ENCODE measurements at regions of chr16 and their contacts with region 1.

Region 1: DNA sequence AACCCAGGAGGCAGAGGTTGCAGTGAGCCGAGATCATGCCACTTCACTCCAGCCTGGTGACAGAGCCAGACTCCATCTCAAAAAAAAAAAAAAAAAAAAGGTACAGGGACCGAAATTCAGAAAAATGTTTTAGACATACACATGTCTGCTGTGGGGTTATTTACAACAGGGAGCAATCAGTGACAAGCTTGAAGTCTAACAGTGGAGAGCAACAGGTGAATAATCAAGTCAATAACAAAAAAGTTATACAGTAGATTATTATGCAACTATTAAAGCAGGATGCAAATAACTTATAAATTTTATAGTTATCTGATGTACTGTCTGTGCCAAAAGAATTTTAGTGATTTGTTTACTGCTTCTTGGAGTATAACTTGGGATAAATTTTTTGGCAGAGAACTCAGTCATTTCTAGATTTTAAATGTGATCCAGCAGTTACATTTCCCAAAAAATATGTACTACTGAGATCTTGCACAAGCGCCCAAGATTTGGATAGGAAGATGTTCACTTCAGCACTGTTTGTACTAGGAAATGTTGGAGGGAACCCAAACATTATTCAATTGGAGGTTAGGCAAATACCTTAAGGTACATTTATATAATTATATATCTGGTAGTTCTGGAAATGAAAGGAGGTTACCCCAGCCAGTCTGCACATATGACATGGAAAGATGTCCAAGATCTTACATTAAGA is 34.1 kb downstream of the EEF2K start:
- DNase-seq: no peak
- H3K4me3 ChIP-seq: no peak overlapping the region
- H3K27ac ChIP-seq: no peak overlapping the region
- H3K4me1 ChIP-seq: peaks cover 9% of the 10 kb centered on the region; the same call in 1 of the 2 replicates
- H3K27me3 ChIP-seq: no peaks in the 10 kb centered on the region
- CTCF ChIP-seq: no peak

Region 2: GRCh38 chr16:22117609-22118008 is 122.6 kb before region 1 on chr16:
- CTCF ChIA-PET with region 1: no interaction called
- POLR2A ChIA-PET with region 1: no interaction called
- intact Hi-C with region 1: no loop called
- DNase-seq: peak in 1 of 2 experiments; percentile 72
- H3K4me3 ChIP-seq: no peak overlapping the region
- H3K27ac ChIP-seq: no peak overlapping the region
- H3K4me1 ChIP-seq: no peaks in the 10 kb centered on the region
- H3K27me3 ChIP-seq: no peaks in the 10 kb centered on the region
- CTCF ChIP-seq: no peak

Region 3: DNA sequence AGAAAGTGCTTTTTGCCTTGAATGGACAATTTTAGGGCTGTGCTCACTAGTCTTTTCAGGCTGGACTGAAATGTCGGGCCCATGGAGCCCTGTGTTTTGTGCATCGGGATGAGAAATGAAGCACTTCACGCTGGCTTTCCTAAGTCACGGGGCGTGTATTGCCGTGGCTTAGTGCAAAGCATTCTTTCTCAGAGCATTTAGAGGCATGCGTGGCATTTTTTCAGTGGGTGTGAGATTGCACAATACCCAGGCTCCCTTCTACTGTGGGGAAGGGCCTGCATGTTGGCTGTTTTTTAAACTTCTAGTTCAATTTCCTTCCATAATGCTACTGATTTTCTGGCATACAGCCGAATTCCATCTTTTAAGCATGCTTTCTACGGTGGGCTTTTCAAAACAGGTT is 44.5 kb after region 1 on chr16:
- CTCF ChIA-PET with region 1: no interaction called
- POLR2A ChIA-PET with region 1: no interaction called
- intact Hi-C with region 1: loop called (anchors 5 kb)
- DNase-seq: no peak
- H3K4me3 ChIP-seq: no peak overlapping the region
- H3K27ac ChIP-seq: no peak overlapping the region
- H3K4me1 ChIP-seq: no peaks in the 10 kb centered on the region
- H3K27me3 ChIP-seq: no peaks in the 10 kb centered on the region
- CTCF ChIP-seq: no peak

Region 4: DNA sequence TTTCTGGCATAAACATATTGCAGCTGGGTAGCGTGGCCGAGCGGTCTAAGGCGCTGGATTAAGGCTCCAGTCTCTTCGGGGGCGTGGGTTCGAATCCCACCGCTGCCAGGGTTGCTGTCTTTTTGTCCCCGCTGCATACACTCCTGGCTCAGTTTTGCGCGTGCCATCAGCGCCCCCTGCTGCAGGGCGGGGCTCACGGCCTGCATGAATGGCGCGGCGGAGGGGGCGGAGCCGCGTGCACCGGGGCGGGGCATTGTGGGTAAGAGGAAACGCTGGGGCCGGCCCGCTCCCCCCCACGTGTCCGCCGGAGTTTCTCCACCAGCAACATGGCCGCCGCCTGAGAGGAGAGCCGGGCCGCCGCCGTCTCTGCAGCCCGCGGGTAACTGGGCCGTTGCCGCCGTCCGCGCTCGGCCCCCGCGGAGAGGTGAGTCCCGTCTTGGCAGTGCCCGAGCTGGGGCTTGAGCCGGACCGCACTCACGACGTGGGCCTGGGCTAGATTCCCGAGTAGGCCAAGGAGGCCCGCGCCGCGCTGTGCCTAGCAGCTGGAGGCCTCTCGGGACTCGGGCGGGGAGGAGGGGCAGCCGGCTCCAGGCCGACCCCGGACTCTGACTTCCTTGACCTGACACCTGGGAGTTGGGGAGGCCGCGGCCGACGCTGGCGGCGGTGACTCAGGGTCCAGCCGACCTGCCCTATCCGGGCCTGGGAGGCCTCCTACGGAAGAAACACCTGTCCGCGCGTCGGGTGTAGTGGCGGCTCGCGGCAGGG is 57.1 kb after region 1 on chr16 and contains the start of gene POLR3E:
- CTCF ChIA-PET with region 1: no interaction called
- POLR2A ChIA-PET with region 1: no interaction called
- intact Hi-C with region 1: no loop called
- DNase-seq: peak; percentile 89 to 100
- H3K4me3 ChIP-seq: peak within 1 kb of the TSS; percentile 78
- H3K27ac ChIP-seq: peak within 1 kb of the TSS; percentile 84
- H3K4me1 ChIP-seq: no peaks in the 10 kb centered on the region
- H3K27me3 ChIP-seq: no peaks in the 10 kb centered on the region
- CTCF ChIP-seq: peak; percentile 86
- total RNA-seq, gene POLR3E: 65.2 and 70.9 TPM in 2 replicates

Region 5: GRCh38 chr16:22312897-22313781 is 73.0 kb after region 1 on chr16:
- CTCF ChIA-PET with region 1: no interaction called
- POLR2A ChIA-PET with region 1: no interaction called
- intact Hi-C with region 1: no loop called
- DNase-seq: no peak
- H3K4me3 ChIP-seq: no peak overlapping the region
- H3K27ac ChIP-seq: no peak overlapping the region
- H3K4me1 ChIP-seq: no peaks in the 10 kb centered on the region
- H3K27me3 ChIP-seq: no peaks in the 10 kb centered on the region
- CTCF ChIP-seq: no peak